ENCODE measurements at regions of chr1 and their contacts with region 1.

Region 1: GRCh38 chr1:205354259-205354904 is 2.3 kb downstream of the KLHDC8A start:
- DNase-seq: peak; percentile 56
- H3K4me3 ChIP-seq: no peak overlapping the region
- H3K27ac ChIP-seq: no peak overlapping the region
- H3K4me1 ChIP-seq: peaks cover 0 to 8% of the 10 kb centered on the region in 2 experiments; a peak in 1 of 4 replicates
- H3K27me3 ChIP-seq: no peaks in the 10 kb centered on the region; the same call in 1 of the 2 replicates
- CTCF ChIP-seq: peak; percentile 96
- EP300 ChIP-seq: no peak
- RAD21 ChIP-seq: peak; percentile 67

Region 2: GRCh38 chr1:205321164-205321958 is 33.0 kb before region 1 on chr1 and contains the start of gene NUAK2:
- CTCF ChIA-PET with region 1: interaction called, 10 read pairs
- POLR2A ChIA-PET with region 1: no interaction called
- DNase-seq: peak; percentile 94
- H3K4me3 ChIP-seq: peak within 1 kb of the TSS; percentile 78 to 95
- H3K27ac ChIP-seq: peak within 1 kb of the TSS in 1 of 2 experiments; percentile 75; a peak in 2 of 4 replicates
- H3K4me1 ChIP-seq: peaks cover 19 to 31% of the 10 kb centered on the region in 2 experiments
- H3K27me3 ChIP-seq: no peaks in the 10 kb centered on the region
- CTCF ChIP-seq: peak; percentile 45
- EP300 ChIP-seq: no peak
- RAD21 ChIP-seq: no peak
- polyA plus RNA-seq, gene NUAK2: 6.8 and 11.1 TPM in 2 replicates

Region 3: GRCh38 chr1:205344066-205344928 is 10.1 kb before region 1 on chr1:
- CTCF ChIA-PET with region 1: interaction called, 22 read pairs
- POLR2A ChIA-PET with region 1: no interaction called
- DNase-seq: peak; percentile 77
- H3K4me3 ChIP-seq: peak overlapping the region; percentile 41 to 56
- H3K27ac ChIP-seq: no peak overlapping the region
- H3K4me1 ChIP-seq: peaks cover 0 to 7% of the 10 kb centered on the region in 2 experiments; a peak in 1 of 4 replicates
- H3K27me3 ChIP-seq: peaks cover 11% of the 10 kb centered on the region; the same call in 1 of the 2 replicates
- CTCF ChIP-seq: no peak
- EP300 ChIP-seq: no peak
- RAD21 ChIP-seq: no peak

Region 4: DNA sequence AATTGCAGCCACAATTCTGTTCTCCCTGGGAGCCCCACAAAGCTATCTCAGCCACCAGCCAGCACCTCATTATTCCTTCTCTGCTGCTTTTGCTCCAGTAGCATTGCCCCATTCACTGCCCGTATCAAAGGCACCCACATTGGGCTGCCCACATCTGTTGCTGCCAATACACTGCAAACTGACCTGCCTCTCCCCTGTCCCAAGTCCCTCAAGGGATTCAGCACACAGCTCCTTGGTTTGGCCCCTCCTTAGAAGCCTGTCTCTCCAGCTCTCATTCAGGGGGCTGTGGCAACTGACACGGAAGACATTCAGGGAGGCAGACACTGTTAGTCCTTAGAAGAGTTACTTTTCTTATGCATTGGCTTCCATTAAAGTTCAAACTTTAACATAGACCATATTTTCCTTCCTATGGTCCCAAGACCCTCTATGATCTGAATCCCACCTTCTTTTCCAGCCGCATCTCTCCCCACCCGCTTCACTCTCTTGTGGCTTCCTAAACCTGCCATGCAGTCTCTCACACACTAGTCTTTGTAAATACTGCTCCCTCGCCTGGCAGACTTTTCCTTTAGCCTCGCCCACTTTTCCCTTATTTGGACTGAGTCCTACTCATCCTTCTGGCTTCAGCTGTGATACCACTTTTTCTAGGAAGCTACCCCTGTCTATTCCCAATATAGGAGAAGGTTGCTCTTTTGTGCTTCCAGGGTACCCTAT is 21.6 kb after region 1 on chr1:
- CTCF ChIA-PET with region 1: interaction called, 16 read pairs
- POLR2A ChIA-PET with region 1: no interaction called
- DNase-seq: no peak
- H3K4me3 ChIP-seq: no peak overlapping the region
- H3K27ac ChIP-seq: no peak overlapping the region
- H3K4me1 ChIP-seq: peaks cover 4 to 34% of the 10 kb centered on the region in 2 experiments
- H3K27me3 ChIP-seq: no peaks in the 10 kb centered on the region
- CTCF ChIP-seq: peak; percentile 21
- EP300 ChIP-seq: no peak
- RAD21 ChIP-seq: no peak

Region 5: DNA sequence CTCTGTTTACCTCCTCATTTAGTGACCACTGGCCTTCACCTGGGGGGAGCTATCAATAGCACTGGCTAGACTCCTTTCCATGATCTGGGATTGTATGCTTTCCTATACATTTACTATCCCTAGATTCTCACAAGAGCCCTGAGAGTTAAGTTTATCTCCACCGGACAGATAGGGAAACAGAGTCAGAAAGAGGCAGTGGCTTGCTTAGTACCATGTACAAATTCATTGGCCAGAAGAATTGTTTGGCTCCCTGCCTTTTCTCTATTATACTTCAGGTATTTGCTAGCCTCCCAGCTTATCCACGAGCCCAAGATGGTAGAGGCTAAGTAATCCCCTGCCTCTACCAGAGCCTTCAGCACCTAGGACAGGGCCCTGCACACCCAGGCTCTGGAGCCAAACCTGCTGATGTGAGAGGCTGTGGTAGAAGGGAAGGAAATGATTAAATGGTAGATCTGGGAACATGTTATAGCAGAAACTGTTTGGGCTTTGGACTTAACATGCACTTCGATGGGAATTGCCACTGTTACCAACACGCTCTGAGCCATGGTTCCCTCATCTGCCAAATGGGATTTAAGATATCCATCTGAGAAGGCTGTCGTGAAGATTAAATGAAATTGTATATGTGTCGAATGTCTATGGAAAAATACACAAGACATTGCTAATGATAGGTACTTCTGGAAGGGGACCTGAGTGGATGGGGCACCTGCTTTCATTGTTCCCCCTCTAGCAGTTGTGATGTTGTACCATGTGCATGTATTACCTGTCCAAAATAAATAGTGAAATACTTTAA is 104.6 kb after region 1 on chr1:
- CTCF ChIA-PET with region 1: interaction called, 12 read pairs
- POLR2A ChIA-PET with region 1: no interaction called
- DNase-seq: no peak
- H3K4me3 ChIP-seq: no peak overlapping the region
- H3K27ac ChIP-seq: no peak overlapping the region
- H3K4me1 ChIP-seq: no peaks in the 10 kb centered on the region; a peak in 1 of 4 replicates
- H3K27me3 ChIP-seq: peaks cover 62% of the 10 kb centered on the region
- CTCF ChIP-seq: no peak
- EP300 ChIP-seq: no peak
- RAD21 ChIP-seq: no peak